ENCODE measurements at regions of chr4 and their contacts with region 1.

Region 1: DNA sequence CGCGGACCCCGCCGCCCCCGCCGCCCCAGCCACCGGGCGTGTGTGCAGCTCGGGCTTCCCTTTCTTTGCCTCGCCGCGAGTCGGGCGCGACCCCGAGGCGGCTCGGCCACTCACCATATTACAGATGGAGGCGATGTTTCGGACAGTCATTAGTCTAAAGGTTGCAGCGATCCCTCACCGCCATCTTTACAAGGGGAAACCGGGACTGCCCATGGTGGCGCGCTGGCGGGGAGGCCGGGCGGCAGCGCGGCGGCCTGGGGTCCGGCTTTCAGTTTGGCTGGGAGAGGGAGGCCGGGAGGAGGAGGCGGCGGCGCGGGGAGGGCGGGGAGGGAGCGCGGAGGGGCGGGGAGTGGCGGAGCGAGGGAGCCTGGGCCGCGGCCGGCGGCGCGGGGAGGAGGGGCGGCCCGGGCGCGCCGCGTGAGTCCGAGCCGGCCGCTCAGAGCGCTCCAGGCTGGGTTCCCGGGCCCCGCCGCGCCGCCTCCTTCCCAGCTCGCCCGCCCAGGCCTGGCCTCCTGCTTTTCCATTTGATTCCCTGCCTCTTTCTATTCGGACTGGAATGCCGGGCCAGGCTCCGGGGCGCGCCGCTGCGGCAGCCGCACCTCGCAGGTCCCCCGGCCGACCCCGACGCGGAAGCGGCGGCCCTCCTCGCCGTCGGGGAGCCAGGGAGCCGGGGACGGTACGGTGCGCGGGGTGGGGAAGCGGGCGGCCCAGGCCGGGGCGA is at the start of gene USP46:
- DNase-seq: peak; percentile 89
- H3K4me3 ChIP-seq: peak within 1 kb of the TSS; percentile 62 to 93 (median 78)
- H3K27ac ChIP-seq: peak within 1 kb of the TSS; percentile 82 to 92 (median 90)
- H3K4me1 ChIP-seq: peaks cover 6 to 48% (median 24%) of the 10 kb centered on the region in 6 donors
- H3K27me3 ChIP-seq: peaks cover 0 to 5% (median 0%) of the 10 kb centered on the region in 7 donors
- CTCF ChIP-seq: no peak
- POLR2A ChIP-seq: no peak
- total RNA-seq, gene USP46: 6.5 to 17.1 (median 10.9) TPM

Region 2: GRCh38 chr4:52535793-52536192 is 123.4 kb before region 1 on chr4:
- intact Hi-C with region 1: no loop called
- DNase-seq: no peak
- H3K4me3 ChIP-seq: no peak overlapping the region
- H3K27ac ChIP-seq: no peak overlapping the region
- H3K4me1 ChIP-seq: no peaks in the 10 kb centered on the region
- H3K27me3 ChIP-seq: no peaks in the 10 kb centered on the region
- CTCF ChIP-seq: no peak
- POLR2A ChIP-seq: no peak

Region 3: DNA sequence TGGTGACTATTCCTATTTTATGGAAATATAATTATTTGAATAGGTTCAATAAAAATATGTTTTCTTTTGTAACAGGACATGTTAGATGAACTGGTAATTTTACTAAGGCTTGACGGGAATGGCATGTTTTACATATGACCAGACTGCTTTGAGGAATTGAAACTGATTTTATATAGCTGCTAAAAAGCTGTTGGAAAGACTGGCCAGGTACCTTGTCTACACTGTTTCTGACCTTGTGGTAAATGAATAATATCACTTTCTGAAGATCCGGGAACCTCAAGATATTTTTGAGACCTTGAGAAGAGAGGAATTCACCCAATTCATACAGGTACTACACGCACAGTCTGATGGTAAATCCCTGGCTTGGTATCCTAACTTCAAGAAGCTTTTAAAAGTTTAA is 42.0 kb after region 1 on chr4:
- intact Hi-C with region 1: loop called (anchors 10 kb)
- DNase-seq: no peak
- H3K4me3 ChIP-seq: no peak overlapping the region
- H3K27ac ChIP-seq: no peak overlapping the region
- H3K4me1 ChIP-seq: peaks cover 0 to 4% (median 0%) of the 10 kb centered on the region in 6 donors
- H3K27me3 ChIP-seq: no peaks in the 10 kb centered on the region
- CTCF ChIP-seq: no peak
- POLR2A ChIP-seq: no peak

Measured in spleen (tissue), 13 donors.